Naive thymus-derived CD4-positive, alpha-beta T cell (primary cell): ENCODE measurements at regions of chr14 and their contacts with region 1.

Region 1: DNA sequence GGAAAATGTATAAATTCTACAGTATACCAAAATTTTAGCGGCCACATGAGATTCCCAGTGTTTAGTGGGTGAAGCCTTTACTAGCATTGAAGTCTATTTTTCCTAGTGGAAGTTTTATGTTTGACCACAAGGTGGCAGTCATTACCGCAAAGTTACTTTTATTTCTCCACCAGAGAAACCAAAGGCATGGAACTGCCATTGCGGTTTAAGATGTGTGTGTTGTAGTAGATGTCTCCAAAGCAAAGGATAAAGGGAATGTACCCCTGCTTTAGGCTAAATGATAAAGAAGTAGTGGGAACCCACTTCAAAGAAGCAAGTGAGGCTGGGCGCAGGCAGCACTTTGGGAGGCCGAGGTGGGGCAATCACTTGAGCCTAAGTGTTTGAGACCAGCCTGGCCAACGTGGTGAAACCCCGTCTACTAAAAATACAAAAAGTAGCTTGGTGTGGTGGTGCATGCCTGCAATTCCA is 140.5 kb downstream of the PRKCH start:
- DNase-seq: peak in 7 of 9 donors; percentile 59 to 78 (median 71)
- ATAC-seq: peak; percentile 76
- H3K4me3 ChIP-seq: no peak overlapping the region
- H3K4me3 Mint-ChIP-seq: peak overlapping the region; percentile 4 to 69 (median 41)
- H3K27ac ChIP-seq: peak overlapping the region; percentile 56
- H3K27ac Mint-ChIP-seq: peak overlapping the region in 8 of 9 donors; percentile 85 to 97 (median 90)
- H3K4me1 ChIP-seq: peaks cover 12 to 21% of the 10 kb centered on the region in 2 donors
- H3K4me1 Mint-ChIP-seq: peaks cover 33 to 87% (median 82%) of the 10 kb centered on the region in 7 donors
- H3K27me3 ChIP-seq: no peaks in the 10 kb centered on the region
- H3K27me3 Mint-ChIP-seq: no peaks in the 10 kb centered on the region

Region 2: GRCh38 chr14:61296719-61297502 is 164.9 kb before region 1 on chr14:
- CTCF ChIA-PET with region 1: interaction called, 3 read pairs
- POLR2A ChIA-PET with region 1: no interaction called
- intact Hi-C with region 1: loop called in 1 of 2 experiments (anchors 1 kb)
- DNase-seq: peak in 7 of 9 donors; percentile 38 to 68 (median 52)
- ATAC-seq: peak; percentile 85
- H3K4me3 ChIP-seq: no peak overlapping the region
- H3K4me3 Mint-ChIP-seq: peak overlapping the region in 2 of 10 donors; percentile 20 to 39
- H3K27ac ChIP-seq: no peak overlapping the region
- H3K27ac Mint-ChIP-seq: peak overlapping the region in 7 of 9 donors; percentile 26 to 88 (median 66)
- H3K4me1 ChIP-seq: peaks cover 15 to 40% of the 10 kb centered on the region in 2 donors
- H3K4me1 Mint-ChIP-seq: peaks cover 18 to 59% (median 56%) of the 10 kb centered on the region in 7 donors
- H3K27me3 ChIP-seq: no peaks in the 10 kb centered on the region
- H3K27me3 Mint-ChIP-seq: no peaks in the 10 kb centered on the region

Region 3: DNA sequence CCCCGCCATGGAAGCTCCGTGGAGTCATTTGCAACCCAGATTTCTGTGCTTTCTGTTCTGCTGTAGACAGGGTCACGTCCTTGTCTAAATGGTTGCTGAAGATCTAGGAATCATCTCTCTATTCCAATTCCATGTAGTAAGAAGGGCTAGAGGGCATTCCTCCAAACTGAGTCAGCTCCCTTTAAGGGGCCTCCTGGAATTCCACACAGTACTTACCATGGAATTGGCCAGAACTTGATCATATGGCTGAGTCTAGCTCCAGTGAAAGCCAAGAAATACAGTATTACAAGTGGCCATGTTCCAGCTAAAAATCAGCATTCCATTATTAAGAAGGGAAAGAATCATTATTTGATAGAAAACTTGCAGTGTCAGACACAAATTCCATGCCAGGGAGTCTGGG is 31.4 kb after region 1 on chr14:
- CTCF ChIA-PET with region 1: interaction called, 8 read pairs
- POLR2A ChIA-PET with region 1: interaction called, 3 read pairs
- intact Hi-C with region 1: loop called in 1 of 2 experiments (anchors 1 kb)
- DNase-seq: no peak
- ATAC-seq: no peak
- H3K4me3 ChIP-seq: no peak overlapping the region
- H3K4me3 Mint-ChIP-seq: no peak overlapping the region
- H3K27ac ChIP-seq: peak overlapping the region; percentile 39
- H3K27ac Mint-ChIP-seq: no peak overlapping the region
- H3K4me1 ChIP-seq: peaks cover 12 to 21% of the 10 kb centered on the region in 2 donors
- H3K4me1 Mint-ChIP-seq: peaks cover 7 to 39% (median 25%) of the 10 kb centered on the region in 7 donors
- H3K27me3 ChIP-seq: no peaks in the 10 kb centered on the region
- H3K27me3 Mint-ChIP-seq: no peaks in the 10 kb centered on the region

Region 4: GRCh38 chr14:62117010-62117750 is 655.3 kb after region 1 on chr14:
- CTCF ChIA-PET with region 1: no interaction called
- POLR2A ChIA-PET with region 1: interaction called, 3 read pairs
- intact Hi-C with region 1: loop called in 1 of 2 experiments (anchors 5 kb)
- DNase-seq: peak; percentile 28 to 58 (median 50)
- ATAC-seq: peak; percentile 90
- H3K4me3 ChIP-seq: peak overlapping the region; percentile 46
- H3K4me3 Mint-ChIP-seq: peak overlapping the region; percentile 40 to 84 (median 74)
- H3K27ac ChIP-seq: no peak overlapping the region
- H3K27ac Mint-ChIP-seq: no peak overlapping the region
- H3K4me1 ChIP-seq: peaks cover 0 to 7% of the 10 kb centered on the region in 2 donors
- H3K4me1 Mint-ChIP-seq: peaks cover 0 to 12% (median 9%) of the 10 kb centered on the region in 7 donors
- H3K27me3 ChIP-seq: peaks cover 0 to 12% of the 10 kb centered on the region in 2 donors
- H3K27me3 Mint-ChIP-seq: peaks cover 66 to 89% (median 70%) of the 10 kb centered on the region in 5 donors